Astrocyte of the cerebellum (primary cell): ENCODE measurements at regions of chr2 and their contacts with region 1.

Region 1: DNA sequence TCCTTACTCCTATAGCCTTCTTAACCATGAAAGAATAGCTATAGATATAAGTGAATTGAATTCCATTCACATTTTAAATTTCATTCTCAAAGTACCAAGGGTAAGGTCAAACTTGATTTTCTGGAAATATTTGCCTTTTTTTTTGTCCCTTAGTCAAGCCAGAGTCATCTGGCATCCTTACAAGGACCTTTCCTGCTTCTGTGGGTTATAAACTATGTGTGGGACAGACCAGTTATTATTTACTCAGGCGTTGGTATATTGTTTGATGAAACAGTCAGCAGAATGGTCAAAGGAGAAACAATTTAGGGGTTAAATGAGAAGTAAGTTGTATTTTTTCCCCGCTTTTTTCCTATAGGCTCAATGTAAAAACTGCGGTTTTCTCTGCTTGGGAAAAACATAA is 1103.2 kb upstream of the ZEB2 start:
- DNase-seq: peak; percentile 84
- H3K4me3 ChIP-seq: no peak overlapping the region
- CTCF ChIP-seq: no peak

Region 2: DNA sequence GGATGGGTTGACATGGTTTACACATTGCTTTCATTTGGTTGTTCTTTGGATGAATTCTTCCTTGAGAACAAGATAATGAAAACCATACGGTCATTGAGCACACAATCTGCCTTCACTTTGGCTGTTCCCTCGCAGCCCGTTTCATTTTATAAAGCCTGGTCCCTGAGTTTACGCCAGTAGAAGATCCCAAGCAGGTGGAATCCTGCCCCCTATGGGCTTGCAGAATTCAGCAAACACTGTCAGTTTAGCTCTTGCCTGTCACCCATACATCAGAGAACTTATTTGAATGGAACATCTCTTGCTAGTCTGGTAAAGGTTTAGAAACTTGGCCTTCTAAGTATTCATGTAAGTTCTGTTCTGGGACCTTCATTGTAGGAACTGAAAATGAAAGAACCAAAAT is 436.8 kb before region 1 on chr2:
- in situ Hi-C with region 1: no loop called
- DNase-seq: no peak
- H3K4me3 ChIP-seq: no peak overlapping the region
- CTCF ChIP-seq: no peak

Region 3: GRCh38 chr2:145724311-145724898 is 101.3 kb after region 1 on chr2:
- in situ Hi-C with region 1: loop called (anchors 5 kb)
- DNase-seq: no peak
- H3K4me3 ChIP-seq: no peak overlapping the region
- CTCF ChIP-seq: no peak